K562 (cell line): ENCODE measurements at regions of chr3 and their contacts with region 1.

Region 1: DNA sequence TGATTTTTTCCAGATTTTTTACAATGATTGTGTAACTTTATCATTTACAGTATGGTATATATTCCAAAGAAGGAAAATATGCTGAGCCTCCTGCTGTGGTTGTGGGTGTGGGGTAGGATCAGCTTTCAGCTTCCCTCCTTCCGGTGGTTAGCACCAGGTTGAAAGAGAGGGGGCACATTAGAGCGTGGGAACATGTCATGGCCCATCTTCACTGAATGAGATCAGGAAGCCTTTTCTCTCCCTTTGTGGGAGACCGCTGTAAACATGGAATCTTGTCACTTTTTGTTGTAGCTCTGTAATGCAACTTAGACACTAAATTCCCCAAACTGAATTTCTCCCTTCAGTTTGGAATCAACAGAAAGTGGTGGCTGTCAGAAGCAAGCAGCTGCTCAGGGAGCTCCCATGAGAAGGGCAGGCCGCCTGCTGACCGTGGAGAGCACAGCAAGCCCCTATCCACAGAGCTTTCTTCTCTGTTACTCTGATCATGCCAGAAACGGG is 86.7 kb upstream of the LIMD1 start:
- DNase-seq: peak in 3 of 4 experiments; percentile 39 to 59 (median 55)
- ATAC-seq: peak; percentile 89
- H3K4me3 ChIP-seq: no peak overlapping the region
- H3K27ac ChIP-seq: no peak overlapping the region
- H3K4me1 ChIP-seq: 0 out of 5 replicates have a peak, but pooled peaks cover 0 to 6% of the 10 kb centered on the region in 2 experiments
- H3K27me3 ChIP-seq: no peaks in the 10 kb centered on the region
- CTCF ChIP-seq: peak; percentile 59 to 70 (median 62)
- EP300 ChIP-seq: no peak
- POLR2A ChIP-seq: no peak
- RAD21 ChIP-seq: peak; percentile 67 to 80

Region 2: GRCh38 chr3:45297331-45297730 is 210.5 kb before region 1 on chr3:
- CTCF ChIA-PET with region 1: no interaction called
- POLR2A ChIA-PET with region 1: no interaction called
- in situ Hi-C with region 1: no loop called
- intact Hi-C with region 1: no loop called
- DNase-seq: no peak
- ATAC-seq: no peak
- H3K4me3 ChIP-seq: no peak overlapping the region
- H3K27ac ChIP-seq: no peak overlapping the region
- H3K4me1 ChIP-seq: no peaks in the 10 kb centered on the region
- H3K27me3 ChIP-seq: peaks cover 19 to 25% of the 10 kb centered on the region in 2 experiments
- CTCF ChIP-seq: no peak
- EP300 ChIP-seq: no peak
- POLR2A ChIP-seq: no peak
- RAD21 ChIP-seq: no peak

Region 3: DNA sequence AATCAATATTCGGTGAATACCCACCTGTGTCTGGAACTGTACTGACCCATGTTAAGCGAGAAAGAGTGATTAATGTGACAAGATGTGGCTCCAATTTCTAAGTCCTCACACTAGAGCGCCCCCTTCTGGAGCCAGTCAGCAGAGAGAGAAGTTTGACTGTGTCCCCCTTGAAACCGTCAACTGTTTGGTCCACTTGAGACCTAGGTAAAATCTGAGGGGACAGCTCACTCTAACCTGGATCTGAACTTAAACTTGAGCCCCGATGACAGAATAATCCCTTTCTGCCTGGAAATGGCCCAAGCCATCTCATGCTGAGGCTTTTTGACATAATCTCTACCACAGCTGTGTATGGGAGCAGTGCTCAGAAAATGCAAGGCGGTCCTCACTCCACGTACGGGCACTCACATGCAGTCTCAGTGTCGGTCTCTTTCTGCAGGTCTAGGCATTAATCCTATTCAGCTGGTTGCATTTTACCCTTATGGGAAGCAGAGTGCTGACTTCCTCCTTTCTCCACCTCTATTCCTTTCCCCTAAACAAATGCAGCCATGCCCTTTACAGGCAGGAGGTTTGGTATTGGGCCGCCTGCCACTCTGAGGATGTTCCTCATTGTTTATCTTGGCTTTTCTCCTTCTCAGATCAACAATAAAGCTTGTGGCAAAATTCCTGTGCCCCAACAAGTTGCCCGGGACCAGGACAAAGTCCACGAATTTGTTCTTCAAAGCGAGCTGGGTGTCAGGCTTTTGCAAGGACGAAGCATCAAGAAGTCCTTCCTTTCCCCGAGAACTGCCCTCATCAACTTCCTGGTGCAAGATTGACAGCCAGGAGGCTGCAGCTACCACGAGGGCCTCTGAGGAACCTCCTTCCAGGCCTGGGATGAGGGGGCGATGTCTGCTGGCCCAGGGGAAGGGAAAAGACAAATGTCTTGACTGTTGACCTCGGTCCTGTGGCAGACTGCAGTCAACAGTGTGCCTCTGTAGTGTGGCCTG is 39.1 kb after region 1 on chr3:
- CTCF ChIA-PET with region 1: no interaction called
- POLR2A ChIA-PET with region 1: interaction called, 4 read pairs
- in situ Hi-C with region 1: no loop called
- intact Hi-C with region 1: loop called (anchors 2 kb)
- DNase-seq: peak; percentile 74 to 86 (median 78)
- ATAC-seq: peak; percentile 52
- H3K4me3 ChIP-seq: no peak overlapping the region
- H3K27ac ChIP-seq: peak overlapping the region; percentile 74; the same call in 2 of the 3 replicates
- H3K4me1 ChIP-seq: peaks cover 25 to 51% of the 10 kb centered on the region in 2 experiments
- H3K27me3 ChIP-seq: no peaks in the 10 kb centered on the region
- CTCF ChIP-seq: peak; percentile 75 to 92 (median 85)
- EP300 ChIP-seq: no peak
- POLR2A ChIP-seq: no peak
- RAD21 ChIP-seq: peak in 1 of 2 experiments; percentile 66; a peak in 2 of 4 replicates

Region 4: DNA sequence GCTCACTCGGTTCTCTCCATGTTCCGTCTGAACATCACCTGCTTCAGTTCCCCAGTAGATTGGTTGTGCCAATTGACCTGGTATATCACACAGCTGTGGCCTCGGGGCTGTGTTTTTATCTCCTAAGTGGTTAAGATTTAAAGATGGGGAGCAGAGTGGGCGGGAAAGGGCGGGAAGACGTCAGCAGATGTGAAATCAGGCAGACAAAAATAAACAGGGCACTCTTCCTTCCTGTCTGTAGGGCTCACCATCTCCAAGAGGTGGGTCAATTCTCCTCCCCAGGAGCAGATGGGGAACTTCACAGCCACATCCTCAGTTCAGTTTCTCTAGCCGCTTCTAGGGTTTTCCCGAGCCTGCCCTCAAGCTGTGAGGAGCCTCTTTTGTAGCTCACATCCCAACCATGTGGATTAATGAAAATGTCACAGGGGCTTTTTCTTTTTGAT is 59.9 kb after region 1 on chr3:
- CTCF ChIA-PET with region 1: no interaction called
- POLR2A ChIA-PET with region 1: no interaction called
- in situ Hi-C with region 1: no loop called
- intact Hi-C with region 1: no loop called
- DNase-seq: no peak
- ATAC-seq: no peak
- H3K4me3 ChIP-seq: no peak overlapping the region
- H3K27ac ChIP-seq: no peak overlapping the region
- H3K4me1 ChIP-seq: peaks cover 2 to 4% of the 10 kb centered on the region in 2 experiments; a peak in 2 of 5 replicates
- H3K27me3 ChIP-seq: no peaks in the 10 kb centered on the region; a peak in 1 of 5 replicates
- CTCF ChIP-seq: no peak
- EP300 ChIP-seq: no peak
- POLR2A ChIP-seq: no peak
- RAD21 ChIP-seq: no peak

Region 5: GRCh38 chr3:45832691-45833090 is 324.8 kb after region 1 on chr3:
- CTCF ChIA-PET with region 1: interaction called, 11 read pairs
- POLR2A ChIA-PET with region 1: no interaction called
- in situ Hi-C with region 1: no loop called
- intact Hi-C with region 1: no loop called
- DNase-seq: peak in 2 of 4 experiments; percentile 24 to 40
- ATAC-seq: peak; percentile 71
- H3K4me3 ChIP-seq: no peak overlapping the region
- H3K27ac ChIP-seq: no peak overlapping the region
- H3K4me1 ChIP-seq: no peaks in the 10 kb centered on the region
- H3K27me3 ChIP-seq: no peaks in the 10 kb centered on the region
- CTCF ChIP-seq: peak; percentile 43 to 54 (median 48); a peak in 4 of 6 replicates
- EP300 ChIP-seq: no peak
- POLR2A ChIP-seq: no peak
- RAD21 ChIP-seq: peak; percentile 46 to 64

Region 6: GRCh38 chr3:45929042-45929679 is 421.3 kb after region 1 on chr3:
- CTCF ChIA-PET with region 1: interaction called, 9 read pairs
- POLR2A ChIA-PET with region 1: no interaction called
- in situ Hi-C with region 1: loop called (anchors 5 kb)
- intact Hi-C with region 1: no loop called
- DNase-seq: peak; percentile 70 to 85 (median 80)
- ATAC-seq: peak; percentile 99
- H3K4me3 ChIP-seq: no peak overlapping the region
- H3K27ac ChIP-seq: no peak overlapping the region
- H3K4me1 ChIP-seq: no peaks in the 10 kb centered on the region
- H3K27me3 ChIP-seq: no peaks in the 10 kb centered on the region
- CTCF ChIP-seq: peak; percentile 86 to 93 (median 91)
- EP300 ChIP-seq: no peak
- POLR2A ChIP-seq: no peak
- RAD21 ChIP-seq: peak; percentile 88 to 89